Heart left ventricle (tissue), 16 donors: ENCODE measurements at regions of chr22 and their contacts with region 1.

Region 1: GRCh38 chr22:23219822-23220484 is 39.6 kb downstream of the BCR start:
- DNase-seq: peak in 2 of 5 donors; percentile 40 to 56
- ATAC-seq: no peak
- H3K4me3 ChIP-seq: no peak overlapping the region
- H3K27ac ChIP-seq: peak overlapping the region in 8 of 12 donors; percentile 11 to 69 (median 23)
- H3K4me1 ChIP-seq: peaks cover 36 to 100% (median 87%) of the 10 kb centered on the region in 12 donors
- H3K27me3 ChIP-seq: no peaks in the 10 kb centered on the region
- CTCF ChIP-seq: no peak
- POLR2A ChIP-seq: peak in 1 of 2 donors; percentile 14

Region 2: GRCh38 chr22:23197836-23198235 is 22.1 kb before region 1 on chr22:
- intact Hi-C with region 1: loop called in 1 of 10 experiments (anchors 2 kb)
- DNase-seq: peak in 1 of 5 donors; percentile 20
- ATAC-seq: peak in 2 of 4 donors; percentile 30 to 80
- H3K4me3 ChIP-seq: no peak overlapping the region
- H3K27ac ChIP-seq: peak overlapping the region in 3 of 12 donors; percentile 34 to 42 (median 34)
- H3K4me1 ChIP-seq: peaks cover 0 to 44% (median 22%) of the 10 kb centered on the region in 12 donors
- H3K27me3 ChIP-seq: no peaks in the 10 kb centered on the region
- CTCF ChIP-seq: no peak
- POLR2A ChIP-seq: no peak

Region 3: GRCh38 chr22:23281406-23282088 is 61.6 kb after region 1 on chr22:
- intact Hi-C with region 1: loop called in 1 of 10 experiments (anchors 10 kb)
- DNase-seq: peak; percentile 83 to 89 (median 84)
- ATAC-seq: peak; percentile 69 to 83 (median 74)
- H3K4me3 ChIP-seq: no peak overlapping the region
- H3K27ac ChIP-seq: peak overlapping the region in 6 of 12 donors; percentile 33 to 82 (median 48)
- H3K4me1 ChIP-seq: peaks cover 0 to 33% (median 19%) of the 10 kb centered on the region in 12 donors
- H3K27me3 ChIP-seq: no peaks in the 10 kb centered on the region
- CTCF ChIP-seq: peak; percentile 85 to 98 (median 94)
- POLR2A ChIP-seq: peak in 1 of 2 donors; percentile 24